WTC11 (cell line): ENCODE measurements at regions of chr17 and their contacts with region 1.

Region 1: DNA sequence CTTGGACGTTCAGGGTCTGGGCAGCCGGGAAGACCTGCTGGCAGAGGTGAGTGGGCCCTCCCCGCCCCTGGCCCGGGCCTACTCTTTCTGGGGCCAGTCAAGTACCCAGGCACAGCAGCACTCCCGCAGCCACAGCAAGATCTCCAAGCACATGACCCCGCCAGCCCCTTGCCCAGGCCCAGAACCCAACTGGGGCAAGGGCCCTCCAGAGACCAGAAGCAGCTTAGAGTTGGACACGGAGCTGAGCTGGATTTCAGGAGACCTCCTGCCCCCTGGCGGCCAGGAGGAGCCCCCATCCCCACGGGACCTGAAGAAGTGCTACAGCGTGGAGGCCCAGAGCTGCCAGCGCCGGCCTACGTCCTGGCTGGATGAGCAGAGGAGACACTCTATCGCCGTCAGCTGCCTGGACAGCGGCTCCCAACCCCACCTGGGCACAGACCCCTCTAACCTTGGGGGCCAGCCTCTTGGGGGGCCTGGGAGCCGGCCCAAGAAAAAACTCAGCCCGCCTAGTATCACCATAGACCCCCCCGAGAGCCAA is 8.6 kb upstream of the ABCC3 start:
- DNase-seq: peak; percentile 88
- ATAC-seq: peak; percentile 75
- H3K4me3 Mint-ChIP-seq: no peak overlapping the region
- H3K27ac Mint-ChIP-seq: no peak overlapping the region
- H3K4me1 Mint-ChIP-seq: peaks cover 37% of the 10 kb centered on the region
- H3K27me3 Mint-ChIP-seq: peaks cover 4% of the 10 kb centered on the region
- CTCF ChIP-seq: peak; percentile 73

Region 2: DNA sequence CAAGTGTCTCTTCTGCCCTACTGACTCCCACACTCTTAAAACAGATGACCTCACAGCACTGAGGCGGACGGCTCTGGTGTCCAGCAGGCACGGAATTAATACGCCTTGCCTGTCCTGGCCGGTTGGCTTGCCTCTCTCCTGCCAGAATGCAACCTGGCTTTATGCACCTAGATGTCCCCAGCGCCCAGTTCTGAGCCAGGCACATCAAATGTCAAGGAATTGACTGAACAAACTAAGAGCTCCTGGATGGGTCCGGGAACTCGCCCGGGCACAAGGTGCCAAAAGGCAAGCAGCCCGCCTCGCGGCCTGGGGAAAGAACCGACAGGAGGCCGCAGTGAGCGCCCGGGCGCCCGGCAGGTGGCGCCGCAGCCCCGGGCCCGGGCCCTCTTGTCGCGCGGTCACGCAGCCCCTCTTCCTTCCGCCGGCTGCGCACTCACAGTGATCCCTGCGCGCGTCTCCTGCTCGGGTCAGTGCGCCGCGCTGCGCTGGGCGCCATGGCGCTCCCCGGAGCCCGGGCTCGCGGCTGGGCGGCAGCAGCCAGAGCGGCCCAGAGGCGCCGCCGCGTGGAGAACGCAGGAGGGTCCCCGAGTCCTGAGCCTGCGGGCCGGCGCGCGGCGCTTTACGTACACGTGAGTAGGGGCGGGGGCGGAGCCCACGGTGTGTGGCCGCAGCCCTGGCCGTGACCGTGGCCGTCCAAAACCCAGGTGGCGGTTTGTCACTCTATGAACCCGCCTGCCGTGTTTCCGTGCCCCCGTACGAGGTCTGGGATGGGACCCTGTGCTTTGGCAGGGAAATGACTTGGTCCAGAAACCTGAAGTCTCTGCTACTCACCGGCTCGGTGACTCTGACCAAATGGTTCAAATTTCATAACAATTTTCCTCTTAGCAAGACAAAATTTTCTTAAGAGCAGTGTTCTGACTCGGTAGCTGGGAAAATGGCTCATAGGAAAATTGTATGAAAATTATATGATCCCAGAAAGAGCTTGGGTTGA is 147.4 kb before region 1 on chr17 and contains the start of gene RSAD1:
- CTCF ChIA-PET with region 1: interaction called, 24 read pairs
- POLR2A ChIA-PET with region 1: no interaction called
- DNase-seq: peak; percentile 83
- ATAC-seq: peak; percentile 82
- H3K4me3 Mint-ChIP-seq: peak within 1 kb of the TSS; percentile 81
- H3K27ac Mint-ChIP-seq: peak within 1 kb of the TSS; percentile 68; the same call in 1 of the 2 replicates
- H3K4me1 Mint-ChIP-seq: peaks cover 14% of the 10 kb centered on the region
- H3K27me3 Mint-ChIP-seq: peaks cover 20% of the 10 kb centered on the region
- CTCF ChIP-seq: peak; percentile 61
- total RNA-seq, gene RSAD1: 35.1 to 41.5 TPM (median 40.5 TPM) in 3 replicates

Region 3: GRCh38 chr17:50547035-50547735 is 78.9 kb before region 1 on chr17 and contains the start of gene SPATA20:
- CTCF ChIA-PET with region 1: interaction called, 313 read pairs
- POLR2A ChIA-PET with region 1: interaction called, 4 read pairs
- DNase-seq: peak; percentile 93
- ATAC-seq: peak; percentile 75
- H3K4me3 Mint-ChIP-seq: peak within 1 kb of the TSS; percentile 66
- H3K27ac Mint-ChIP-seq: no peak within 1 kb of the TSS; the same call in 1 of the 2 replicates
- H3K4me1 Mint-ChIP-seq: peaks cover 19% of the 10 kb centered on the region
- H3K27me3 Mint-ChIP-seq: peaks cover 8% of the 10 kb centered on the region
- CTCF ChIP-seq: peak; percentile 95
- total RNA-seq, gene SPATA20: 24.6 to 30.6 TPM (median 26.3 TPM) in 3 replicates

Region 4: GRCh38 chr17:50583641-50584040 is 42.5 kb before region 1 on chr17:
- CTCF ChIA-PET with region 1: interaction called, 26 read pairs
- POLR2A ChIA-PET with region 1: interaction called, 3 read pairs
- DNase-seq: no peak
- ATAC-seq: peak; percentile 71
- H3K4me3 Mint-ChIP-seq: no peak overlapping the region
- H3K27ac Mint-ChIP-seq: peak overlapping the region; percentile 27; the same call in 1 of the 2 replicates
- H3K4me1 Mint-ChIP-seq: peaks cover 23% of the 10 kb centered on the region
- H3K27me3 Mint-ChIP-seq: no peaks in the 10 kb centered on the region
- CTCF ChIP-seq: no peak

Region 5: DNA sequence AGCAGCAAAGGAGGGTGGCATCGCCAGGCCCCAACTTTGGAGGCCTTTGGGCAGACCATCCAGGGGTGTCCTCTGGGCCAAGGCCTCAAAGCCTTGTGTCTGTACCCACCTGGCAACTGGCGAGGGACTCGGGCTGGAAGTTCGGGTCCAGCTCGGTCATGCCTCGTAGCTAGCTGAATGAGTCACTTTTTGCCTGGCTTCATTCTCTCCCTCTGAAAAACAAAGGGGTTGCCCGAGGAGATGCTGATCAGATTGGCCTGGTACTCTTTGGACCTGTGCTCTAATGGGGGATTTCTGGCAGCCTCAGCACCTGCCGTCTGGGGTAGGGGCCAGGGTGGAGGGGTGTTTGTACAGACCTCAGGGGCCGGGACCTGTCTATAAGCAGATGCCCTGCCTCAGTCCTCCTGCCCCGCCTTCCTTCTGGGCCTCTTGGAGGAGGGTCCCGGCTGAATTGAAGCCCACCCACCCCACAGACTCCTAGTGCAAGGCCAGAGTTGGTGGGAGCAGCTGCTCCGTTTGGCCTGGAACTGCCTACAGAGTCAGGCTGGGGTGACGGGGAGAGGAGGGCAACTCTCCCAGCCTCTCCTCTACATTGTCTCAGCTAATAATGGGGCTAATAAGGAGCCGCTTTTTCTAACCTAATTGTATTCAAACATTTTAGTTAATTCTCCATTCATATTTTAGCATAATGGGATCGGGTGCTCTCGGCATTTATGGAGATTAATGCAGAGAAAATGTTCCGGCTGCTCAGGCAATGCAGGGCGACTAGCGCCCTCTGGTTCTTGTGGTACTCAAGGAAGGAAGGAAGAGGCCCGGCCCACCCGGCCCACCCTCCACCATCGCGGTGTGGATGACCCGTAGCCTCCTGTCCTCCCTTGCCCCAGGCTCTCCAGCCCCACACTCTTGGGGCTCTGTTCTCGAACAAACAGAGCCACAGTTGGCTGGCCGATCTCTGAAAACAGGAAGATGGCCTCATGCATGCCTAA is 12.8 kb before region 1 on chr17:
- CTCF ChIA-PET with region 1: interaction called, 16 read pairs
- POLR2A ChIA-PET with region 1: interaction called, 6 read pairs
- DNase-seq: no peak
- ATAC-seq: peak; percentile 26; the same call in 1 of the 2 replicates
- H3K4me3 Mint-ChIP-seq: no peak overlapping the region
- H3K27ac Mint-ChIP-seq: no peak overlapping the region
- H3K4me1 Mint-ChIP-seq: peaks cover 11% of the 10 kb centered on the region
- H3K27me3 Mint-ChIP-seq: no peaks in the 10 kb centered on the region
- CTCF ChIP-seq: no peak

Region 6: GRCh38 chr17:50672831-50673601 is 46.9 kb after region 1 on chr17:
- CTCF ChIA-PET with region 1: interaction called, 11 read pairs
- POLR2A ChIA-PET with region 1: no interaction called
- DNase-seq: no peak
- ATAC-seq: no peak
- H3K4me3 Mint-ChIP-seq: no peak overlapping the region
- H3K27ac Mint-ChIP-seq: no peak overlapping the region
- H3K4me1 Mint-ChIP-seq: peaks cover 10% of the 10 kb centered on the region
- H3K27me3 Mint-ChIP-seq: no peaks in the 10 kb centered on the region; the same call in 1 of the 2 replicates
- CTCF ChIP-seq: no peak

Region 7: DNA sequence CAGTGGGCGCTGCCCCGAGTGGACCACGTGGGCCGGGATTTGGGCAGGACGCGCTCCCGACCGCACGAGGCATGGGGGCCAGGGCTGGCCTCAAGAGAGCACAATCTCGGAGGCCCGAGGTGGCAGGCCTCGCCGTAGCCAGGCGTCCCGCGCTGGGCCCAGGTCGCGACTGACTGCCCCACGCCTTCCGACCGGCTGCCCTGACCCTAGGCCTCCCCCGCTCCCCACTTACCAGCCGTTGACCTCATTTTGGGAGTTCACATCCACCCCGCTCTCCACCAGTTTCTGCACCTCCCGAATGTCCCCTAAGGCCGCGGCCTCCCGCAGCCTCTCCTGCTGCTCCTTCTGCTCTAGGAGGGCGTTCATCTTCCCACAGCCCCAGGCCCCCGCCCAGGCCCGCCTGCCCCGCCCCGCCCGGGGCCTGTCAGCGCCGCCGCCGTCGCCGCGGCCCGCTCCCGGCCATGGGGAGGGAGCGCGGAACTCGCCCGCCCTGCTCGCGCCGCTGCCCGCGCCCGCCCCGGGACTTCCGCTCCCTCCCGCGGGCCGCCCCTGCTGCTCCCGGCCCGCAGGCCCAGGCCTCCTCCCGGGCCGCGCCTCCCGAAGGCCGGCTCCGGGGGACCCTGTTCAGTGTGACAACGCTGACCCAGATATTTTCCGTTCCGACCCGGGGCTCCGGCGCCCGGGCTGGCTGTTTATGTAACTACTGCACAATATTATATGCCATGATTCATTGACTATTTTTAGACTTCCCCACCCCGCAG is 81.4 kb after region 1 on chr17 and contains the start of gene ANKRD40:
- CTCF ChIA-PET with region 1: interaction called, 20 read pairs
- POLR2A ChIA-PET with region 1: no interaction called
- DNase-seq: peak; percentile 70
- ATAC-seq: peak; percentile 76
- H3K4me3 Mint-ChIP-seq: peak within 1 kb of the TSS; percentile 91
- H3K27ac Mint-ChIP-seq: peak within 1 kb of the TSS; percentile 91
- H3K4me1 Mint-ChIP-seq: peaks cover 28% of the 10 kb centered on the region
- H3K27me3 Mint-ChIP-seq: no peaks in the 10 kb centered on the region
- CTCF ChIP-seq: no peak
- total RNA-seq, gene ANKRD40: 43.3 to 45.3 TPM (median 45.3 TPM) in 3 replicates

Region 8: GRCh38 chr17:50754521-50754920 is 128.4 kb after region 1 on chr17:
- CTCF ChIA-PET with region 1: no interaction called
- POLR2A ChIA-PET with region 1: no interaction called
- DNase-seq: no peak
- ATAC-seq: no peak
- H3K4me3 Mint-ChIP-seq: no peak overlapping the region
- H3K27ac Mint-ChIP-seq: 0 out of 2 replicates have a peak overlapping the region, but pooled peaks have one; percentile 8
- H3K4me1 Mint-ChIP-seq: no peaks in the 10 kb centered on the region
- H3K27me3 Mint-ChIP-seq: no peaks in the 10 kb centered on the region
- CTCF ChIP-seq: no peak